ENCODE measurements at regions of chr19 and their contacts with region 1.

Region 1: GRCh38 chr19:3324321-3324856 is 42.0 kb upstream of the NFIC start:
- DNase-seq: no peak
- ATAC-seq: peak; percentile 51; the same call in 1 of the 2 replicates
- H3K4me3 ChIP-seq: no peak overlapping the region
- H3K27ac ChIP-seq: no peak overlapping the region
- H3K4me1 ChIP-seq: no peaks in the 10 kb centered on the region
- H3K27me3 ChIP-seq: peaks cover 7% of the 10 kb centered on the region; the same call in 1 of the 2 replicates
- CTCF ChIP-seq: peak; percentile 57
- POLR2A ChIP-seq: no peak
- RAD21 ChIP-seq: peak; percentile 49

Region 2: GRCh38 chr19:3313199-3313575 is 11.2 kb before region 1 on chr19:
- CTCF ChIA-PET with region 1: no interaction called
- POLR2A ChIA-PET with region 1: no interaction called
- dilution Hi-C with region 1: no loop called
- in situ Hi-C with region 1: no loop called
- intact Hi-C with region 1: no loop called
- DNase-seq: no peak
- ATAC-seq: no peak
- H3K4me3 ChIP-seq: no peak overlapping the region
- H3K27ac ChIP-seq: no peak overlapping the region
- H3K4me1 ChIP-seq: no peaks in the 10 kb centered on the region
- H3K27me3 ChIP-seq: peaks cover 28% of the 10 kb centered on the region
- CTCF ChIP-seq: no peak
- POLR2A ChIP-seq: no peak
- RAD21 ChIP-seq: no peak

Region 3: GRCh38 chr19:3429581-3430080 is 105.2 kb after region 1 on chr19:
- CTCF ChIA-PET with region 1: interaction called, 3 read pairs
- POLR2A ChIA-PET with region 1: no interaction called
- dilution Hi-C with region 1: no loop called
- in situ Hi-C with region 1: no loop called
- intact Hi-C with region 1: loop called (anchors 1 kb)
- DNase-seq: peak; percentile 65
- ATAC-seq: peak; percentile 84
- H3K4me3 ChIP-seq: no peak overlapping the region
- H3K27ac ChIP-seq: no peak overlapping the region
- H3K4me1 ChIP-seq: peaks cover 9% of the 10 kb centered on the region
- H3K27me3 ChIP-seq: no peaks in the 10 kb centered on the region
- CTCF ChIP-seq: peak; percentile 84
- POLR2A ChIP-seq: no peak
- RAD21 ChIP-seq: peak; percentile 88

Region 4: DNA sequence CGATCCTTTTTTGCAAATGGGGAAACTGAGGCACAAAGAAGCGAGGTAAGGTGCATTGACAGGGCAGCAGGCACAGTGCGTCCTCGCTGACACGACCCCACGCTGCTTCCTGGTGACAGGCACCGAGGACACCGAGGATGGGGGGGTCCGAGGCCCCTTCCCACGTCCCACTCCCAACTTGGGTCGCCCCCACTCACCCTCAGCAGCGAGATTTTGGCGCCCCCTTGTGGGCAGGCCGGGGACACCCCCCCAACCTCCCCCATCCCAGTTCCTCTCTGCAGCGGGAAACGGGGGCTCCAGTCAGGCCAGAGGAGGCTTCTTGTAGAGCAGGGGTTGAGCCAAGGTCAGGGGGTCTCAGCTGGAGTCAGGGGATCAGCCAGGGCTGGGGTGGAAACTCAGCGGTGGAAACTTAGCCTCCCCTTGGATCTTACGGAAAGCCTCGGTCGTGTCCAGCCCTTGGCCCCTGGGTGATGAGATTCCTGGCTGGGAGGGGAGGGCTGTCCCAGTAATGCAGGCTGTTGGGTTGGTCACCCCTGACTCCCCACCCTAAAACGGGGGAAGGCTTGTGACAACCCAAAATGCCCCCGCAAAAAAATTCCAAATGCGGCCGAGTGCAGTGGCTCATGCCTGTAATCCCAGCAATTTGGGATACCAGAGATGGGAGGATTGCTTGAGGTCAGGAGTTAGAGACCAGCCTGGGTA is 147.7 kb after region 1 on chr19:
- CTCF ChIA-PET with region 1: interaction called, 5 read pairs
- POLR2A ChIA-PET with region 1: no interaction called
- dilution Hi-C with region 1: no loop called
- in situ Hi-C with region 1: loop called (anchors 5 kb)
- intact Hi-C with region 1: loop called (anchors 1 kb)
- DNase-seq: no peak
- ATAC-seq: peak; percentile 40; the same call in 1 of the 2 replicates
- H3K4me3 ChIP-seq: no peak overlapping the region
- H3K27ac ChIP-seq: no peak overlapping the region
- H3K4me1 ChIP-seq: no peaks in the 10 kb centered on the region
- H3K27me3 ChIP-seq: peaks cover 12% of the 10 kb centered on the region
- CTCF ChIP-seq: peak; percentile 69
- POLR2A ChIP-seq: no peak
- RAD21 ChIP-seq: peak; percentile 74

Region 5: GRCh38 chr19:3479177-3479833 is 154.9 kb after region 1 on chr19:
- CTCF ChIA-PET with region 1: no interaction called
- POLR2A ChIA-PET with region 1: no interaction called
- dilution Hi-C with region 1: no loop called
- in situ Hi-C with region 1: loop called (anchors 5 kb)
- intact Hi-C with region 1: loop called (anchors 2 kb)
- DNase-seq: no peak
- ATAC-seq: peak; percentile 48; the same call in 1 of the 2 replicates
- H3K4me3 ChIP-seq: no peak overlapping the region
- H3K27ac ChIP-seq: no peak overlapping the region
- H3K4me1 ChIP-seq: no peaks in the 10 kb centered on the region
- H3K27me3 ChIP-seq: peaks cover 42% of the 10 kb centered on the region
- CTCF ChIP-seq: no peak
- POLR2A ChIP-seq: no peak
- RAD21 ChIP-seq: no peak

Region 6: DNA sequence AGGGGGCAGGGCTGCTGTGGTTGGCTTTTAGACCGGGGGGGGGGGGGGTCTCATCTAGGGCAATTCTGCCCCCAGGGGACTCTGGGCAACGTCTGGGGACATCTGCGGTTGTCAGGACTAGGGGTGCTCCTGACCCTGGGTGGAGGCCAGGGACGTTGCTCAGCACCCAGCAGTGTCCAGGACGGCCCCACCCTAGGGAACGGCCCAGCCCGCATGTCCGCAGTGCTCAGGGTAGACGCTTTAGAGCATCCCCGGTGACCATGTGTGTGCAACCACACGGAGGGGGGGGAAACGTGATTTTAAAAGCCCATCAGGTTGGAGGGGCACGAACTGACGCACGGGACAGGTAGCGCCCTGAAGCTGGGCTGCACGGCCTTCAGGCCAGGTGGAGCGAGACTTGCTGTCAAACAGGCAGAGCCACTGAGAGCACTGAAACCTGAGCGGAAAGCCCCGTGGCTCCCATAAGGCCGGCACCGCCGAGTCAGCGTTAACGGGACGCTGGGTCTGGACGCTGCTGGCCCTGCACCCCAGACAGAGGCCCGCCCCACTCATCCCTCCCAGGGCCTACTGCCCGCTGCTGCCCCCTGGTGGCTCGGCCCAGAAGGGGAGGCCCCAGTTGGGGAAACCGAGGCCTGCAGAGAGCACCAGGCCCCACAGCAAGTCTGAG is 293.9 kb after region 1 on chr19:
- CTCF ChIA-PET with region 1: no interaction called
- POLR2A ChIA-PET with region 1: no interaction called
- dilution Hi-C with region 1: no loop called
- in situ Hi-C with region 1: loop called (anchors 25 kb)
- intact Hi-C with region 1: loop called (anchors 10 kb)
- DNase-seq: peak; percentile 29
- ATAC-seq: peak; percentile 95
- H3K4me3 ChIP-seq: no peak overlapping the region
- H3K27ac ChIP-seq: no peak overlapping the region
- H3K4me1 ChIP-seq: peaks cover 3% of the 10 kb centered on the region; the same call in 1 of the 2 replicates
- H3K27me3 ChIP-seq: no peaks in the 10 kb centered on the region
- CTCF ChIP-seq: peak; percentile 84
- POLR2A ChIP-seq: no peak
- RAD21 ChIP-seq: peak; percentile 80

Region 7: GRCh38 chr19:3700221-3701032 is 376.0 kb after region 1 on chr19 and contains the start of gene PIP5K1C:
- CTCF ChIA-PET with region 1: no interaction called
- POLR2A ChIA-PET with region 1: no interaction called
- dilution Hi-C with region 1: no loop called
- in situ Hi-C with region 1: no loop called
- intact Hi-C with region 1: loop called (anchors 10 kb)
- DNase-seq: peak; percentile 78
- ATAC-seq: peak; percentile 97
- H3K4me3 ChIP-seq: peak within 1 kb of the TSS; percentile 97
- H3K27ac ChIP-seq: peak within 1 kb of the TSS; percentile 77
- H3K4me1 ChIP-seq: peaks cover 8% of the 10 kb centered on the region; the same call in 1 of the 2 replicates
- H3K27me3 ChIP-seq: peaks cover 2% of the 10 kb centered on the region; the same call in 1 of the 2 replicates
- CTCF ChIP-seq: peak; percentile 87
- POLR2A ChIP-seq: peak; percentile 39; the same call in 1 of the 2 replicates
- RAD21 ChIP-seq: peak; percentile 70
- total RNA-seq, gene PIP5K1C: 10.8 and 13.6 TPM in 2 replicates